Activated CD4-positive, alpha-beta T cell treated with anti-CD3 and anti-CD28 coated beads, Interleukin-2, amount 10 ng/mL, durations not matched to agents 24 days and 14 days (primary cell): ENCODE measurements at regions of chr5 and their contacts with region 1.

Region 1: GRCh38 chr5:43313035-43313853 is at the start of gene HMGCS1:
- DNase-seq: peak; percentile 100
- H3K4me3 Mint-ChIP-seq: peak within 1 kb of the TSS; percentile 89
- H3K27ac Mint-ChIP-seq: peak within 1 kb of the TSS; percentile 94
- H3K4me1 Mint-ChIP-seq: peaks cover 56% of the 10 kb centered on the region
- H3K27me3 Mint-ChIP-seq: no peaks in the 10 kb centered on the region
- total RNA-seq, gene HMGCS1: 230 and 241 TPM in 2 replicates

Region 2: DNA sequence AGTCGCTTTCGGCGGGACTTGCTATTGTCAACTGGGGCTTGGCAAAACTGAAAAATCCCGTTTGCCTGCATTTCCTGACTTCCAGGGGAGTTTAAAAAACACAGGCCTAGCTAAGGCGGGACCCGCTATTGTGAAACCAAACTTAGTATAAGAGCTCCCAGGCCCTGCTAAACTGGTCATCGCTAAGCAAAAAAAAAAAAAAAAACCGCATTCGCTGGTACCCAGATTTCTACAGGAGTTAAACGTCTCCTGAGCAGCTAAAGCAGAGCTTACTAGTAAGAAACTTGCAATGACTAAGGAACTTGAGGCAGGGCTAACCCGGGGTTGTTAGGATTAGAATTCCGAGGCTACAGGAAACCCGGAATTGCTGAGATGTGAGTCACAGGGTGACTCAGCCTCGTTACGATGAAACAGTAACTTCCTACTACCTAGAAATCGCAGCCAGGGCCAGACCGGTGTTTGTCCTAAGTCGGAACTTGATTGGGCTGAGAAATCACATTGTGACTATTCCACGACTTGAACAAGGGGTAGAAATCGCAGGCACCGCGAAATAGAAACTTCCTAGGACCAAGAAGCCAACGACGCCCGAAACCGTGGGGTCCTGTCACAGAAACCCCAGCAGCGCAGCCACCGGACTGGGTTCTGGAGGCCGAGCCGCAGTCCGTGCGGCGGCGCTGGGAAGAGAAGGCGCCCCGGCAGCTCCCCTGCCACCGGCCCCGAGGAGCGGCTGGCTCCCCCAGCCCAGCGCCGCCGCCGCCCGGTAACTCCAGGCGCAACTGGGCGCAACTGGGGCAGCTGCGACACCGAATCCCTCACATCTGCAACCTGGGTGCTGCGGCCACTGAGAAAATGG is 362.6 kb before region 1 on chr5:
- intact Hi-C with region 1: loop called (anchors 2 kb)
- DNase-seq: peak; percentile 89
- H3K4me3 Mint-ChIP-seq: peak overlapping the region; percentile 95
- H3K27ac Mint-ChIP-seq: peak overlapping the region; percentile 100
- H3K4me1 Mint-ChIP-seq: peaks cover 37% of the 10 kb centered on the region
- H3K27me3 Mint-ChIP-seq: peaks cover 5% of the 10 kb centered on the region

Region 3: GRCh38 chr5:43066799-43067741 is 246.2 kb before region 1 on chr5:
- intact Hi-C with region 1: loop called (anchors 1 kb)
- DNase-seq: peak; percentile 96
- H3K4me3 Mint-ChIP-seq: peak overlapping the region; percentile 92
- H3K27ac Mint-ChIP-seq: peak overlapping the region; percentile 100
- H3K4me1 Mint-ChIP-seq: peaks cover 32% of the 10 kb centered on the region
- H3K27me3 Mint-ChIP-seq: no peaks in the 10 kb centered on the region

Region 4: GRCh38 chr5:43191740-43192557 is 121.3 kb before region 1 on chr5 and contains the start of gene NIM1K:
- intact Hi-C with region 1: loop called (anchors 1 kb)
- DNase-seq: peak; percentile 85
- H3K4me3 Mint-ChIP-seq: peak within 1 kb of the TSS; percentile 86
- H3K27ac Mint-ChIP-seq: peak within 1 kb of the TSS; percentile 86
- H3K4me1 Mint-ChIP-seq: peaks cover 31% of the 10 kb centered on the region
- H3K27me3 Mint-ChIP-seq: peaks cover 15% of the 10 kb centered on the region
- total RNA-seq, gene NIM1K: 0.82 and 0.97 TPM in 2 replicates

Region 5: DNA sequence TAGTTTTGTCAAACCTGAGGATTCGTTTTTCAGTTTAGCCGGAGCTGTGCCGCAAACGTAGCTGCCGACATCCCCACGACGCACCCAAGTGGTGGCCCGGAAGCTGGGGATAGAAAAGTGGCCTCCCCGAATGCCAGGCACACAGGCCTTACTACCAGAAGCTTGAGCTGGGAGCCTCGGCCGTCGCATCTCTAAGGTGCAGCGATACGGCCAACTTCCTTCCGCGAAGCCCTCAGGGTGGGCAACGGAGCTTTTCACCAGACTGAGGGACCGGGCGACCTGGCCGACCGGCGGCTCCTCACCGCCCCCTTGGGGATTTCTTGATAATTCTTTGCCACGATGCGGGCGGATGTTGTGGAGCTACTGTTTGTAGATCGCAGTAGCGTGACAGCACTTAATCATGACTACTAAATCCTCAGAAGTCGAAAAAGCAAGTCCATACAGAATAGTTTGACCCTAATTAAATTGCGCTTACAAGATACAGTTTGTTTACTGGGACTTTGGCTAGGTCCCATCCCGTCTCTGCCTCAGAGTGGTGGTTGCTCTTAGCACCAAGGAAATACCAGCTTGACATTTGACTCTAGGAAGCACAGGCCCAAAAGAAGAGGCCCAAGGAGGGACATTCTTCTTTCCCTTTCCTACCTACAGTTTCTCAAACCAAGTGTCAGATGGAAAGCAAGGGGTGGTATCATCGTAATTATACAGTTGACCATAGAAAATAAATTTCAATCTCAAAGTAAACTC is 171.0 kb after region 1 on chr5:
- intact Hi-C with region 1: loop called (anchors 1 kb)
- DNase-seq: peak; percentile 96
- H3K4me3 Mint-ChIP-seq: peak overlapping the region; percentile 94
- H3K27ac Mint-ChIP-seq: peak overlapping the region; percentile 100
- H3K4me1 Mint-ChIP-seq: peaks cover 23% of the 10 kb centered on the region
- H3K27me3 Mint-ChIP-seq: no peaks in the 10 kb centered on the region

Region 6: DNA sequence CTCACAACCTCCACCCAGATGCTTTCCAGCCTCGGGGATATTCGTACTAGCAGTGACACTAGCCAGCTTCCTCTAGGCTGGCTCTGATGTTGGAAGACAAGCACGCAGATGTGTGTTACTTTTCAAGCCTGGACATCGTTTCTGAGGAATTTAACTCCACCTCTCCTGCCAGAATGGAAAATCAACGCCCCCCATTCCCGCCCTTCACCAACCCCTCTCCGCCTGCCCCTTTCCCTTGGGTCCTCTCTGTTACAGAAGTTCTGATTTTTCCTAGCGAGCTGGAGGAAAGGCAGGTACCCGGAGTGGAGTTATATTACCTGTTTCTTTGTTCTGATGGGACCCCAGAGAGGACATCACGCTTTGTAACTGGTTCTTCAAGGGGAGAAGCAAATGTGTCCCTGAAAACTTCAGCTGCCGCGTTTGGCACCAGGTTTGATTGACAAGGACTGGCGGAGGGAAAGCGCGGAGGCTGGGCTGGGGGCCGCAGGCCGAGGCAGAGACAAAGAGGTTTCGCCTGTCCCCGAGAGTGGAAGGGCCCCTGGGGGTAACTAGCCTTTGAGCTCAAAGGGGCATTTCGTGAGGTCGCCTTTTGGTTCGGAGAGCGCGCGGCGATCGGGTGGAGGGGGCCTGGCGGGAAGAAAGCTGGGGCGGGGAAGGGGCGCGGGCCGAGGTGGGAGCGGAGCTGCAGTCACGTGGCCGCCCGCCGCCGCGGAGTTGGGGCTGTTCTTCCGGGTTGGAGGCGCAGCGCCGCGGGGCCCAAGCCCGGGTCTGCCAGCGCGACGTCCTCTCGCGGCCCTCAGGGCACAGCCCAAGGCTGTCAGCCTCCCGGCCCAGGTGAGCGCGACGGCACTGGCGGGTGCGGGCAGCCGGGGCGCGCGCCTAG is 289.5 kb after region 1 on chr5 and contains the start of gene NNT:
- intact Hi-C with region 1: loop called (anchors 10 kb)
- DNase-seq: peak; percentile 94
- H3K4me3 Mint-ChIP-seq: peak within 1 kb of the TSS; percentile 91
- H3K27ac Mint-ChIP-seq: peak within 1 kb of the TSS; percentile 85
- H3K4me1 Mint-ChIP-seq: peaks cover 30% of the 10 kb centered on the region
- H3K27me3 Mint-ChIP-seq: no peaks in the 10 kb centered on the region
- total RNA-seq, gene NNT: 52.2 and 59.1 TPM in 2 replicates